Ascending aorta (tissue), 2 donors: ENCODE measurements at regions of chr2 and their contacts with region 1.

Region 1: GRCh38 chr2:27032495-27033252 is at the start of gene TMEM214:
- DNase-seq: peak; percentile 49 to 94
- H3K4me3 ChIP-seq: peak within 1 kb of the TSS; percentile 59 to 92
- H3K27ac ChIP-seq: peak within 1 kb of the TSS; percentile 78 to 91
- H3K4me1 ChIP-seq: peaks cover 5 to 18% of the 10 kb centered on the region in 2 donors
- H3K27me3 ChIP-seq: no peaks in the 10 kb centered on the region
- CTCF ChIP-seq: peak in 1 of 3 experiments; percentile 8
- total RNA-seq, gene TMEM214: 74.1 TPM

Region 2: DNA sequence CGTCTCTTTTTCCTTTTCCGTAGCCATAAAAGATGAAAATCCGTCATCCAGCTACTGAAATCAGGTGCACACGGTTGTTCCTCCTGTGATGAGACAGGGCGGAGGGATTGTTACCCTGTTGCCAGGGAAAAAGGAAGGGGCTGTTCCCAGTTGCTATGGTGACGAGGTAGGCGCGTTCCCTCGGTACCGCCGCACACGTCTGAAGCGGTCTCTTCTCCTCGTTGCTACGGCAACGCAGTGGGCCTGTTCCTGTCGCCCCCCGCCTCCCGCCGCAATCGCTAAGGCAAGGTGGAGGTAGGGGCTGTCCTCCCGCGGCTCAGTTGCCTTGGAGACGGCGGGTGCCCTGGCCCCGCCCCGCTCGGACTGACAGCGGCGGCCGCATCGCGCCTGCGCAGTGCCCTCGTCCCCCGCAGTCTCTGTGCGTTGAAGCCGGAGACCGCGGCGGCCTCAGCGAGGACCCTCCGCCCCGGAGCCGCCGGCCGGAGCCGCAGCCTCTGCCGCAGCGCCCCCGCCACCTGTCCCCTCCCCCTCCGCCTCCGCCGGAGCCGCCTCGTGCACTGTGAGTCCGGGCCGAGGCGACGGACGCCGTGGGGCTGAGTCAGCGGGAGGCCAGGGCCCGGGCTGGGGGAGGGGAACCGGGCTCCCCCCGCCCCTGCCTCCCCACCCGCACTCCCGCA is 62.3 kb before region 1 on chr2 and contains the start of gene MAPRE3:
- intact Hi-C with region 1: loop called (anchors 2 kb)
- DNase-seq: peak in 1 of 2 donors; percentile 87
- H3K4me3 ChIP-seq: peak within 1 kb of the TSS; percentile 76 to 80
- H3K27ac ChIP-seq: peak within 1 kb of the TSS; percentile 72 to 81
- H3K4me1 ChIP-seq: peaks cover 6% of the 10 kb centered on the region in 2 donors
- H3K27me3 ChIP-seq: no peaks in the 10 kb centered on the region
- CTCF ChIP-seq: no peak
- total RNA-seq, gene MAPRE3: 18.9 TPM

Region 3: DNA sequence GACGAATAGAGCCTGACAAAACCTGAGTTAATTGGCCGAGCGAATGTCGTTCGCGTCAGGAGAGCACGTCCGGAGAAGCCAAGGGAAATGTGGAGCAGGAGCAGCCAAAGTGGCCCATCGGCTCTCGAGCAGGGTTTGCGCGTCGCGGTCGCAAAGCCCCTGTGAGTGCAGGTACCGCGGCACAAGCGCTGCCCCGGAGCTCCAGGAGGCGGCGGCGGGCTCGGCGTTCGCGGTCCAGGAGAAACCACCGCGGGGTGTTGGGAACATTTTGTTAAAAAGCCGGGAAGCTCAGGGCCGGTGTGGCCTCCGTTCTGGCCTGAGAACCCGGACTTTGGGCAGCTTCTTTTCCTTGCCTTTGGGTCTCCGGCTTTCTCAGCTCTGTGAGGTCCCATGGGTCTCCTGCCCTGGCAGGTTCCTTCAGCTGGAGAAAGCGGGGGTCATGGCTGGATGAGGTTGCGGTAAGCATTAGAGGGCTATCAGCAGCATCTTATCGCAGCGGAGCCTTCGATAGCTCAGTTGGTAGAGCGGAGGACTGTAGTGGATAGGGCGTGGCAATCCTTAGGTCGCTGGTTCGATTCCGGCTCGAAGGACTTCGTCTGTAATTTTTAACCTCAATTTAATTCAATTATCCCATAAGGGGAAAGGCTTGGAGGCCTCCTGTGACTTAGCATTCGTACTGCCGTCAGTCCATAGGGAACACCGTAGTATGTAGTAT is 17.8 kb after region 1 on chr2:
- intact Hi-C with region 1: loop called (anchors 1 kb)
- DNase-seq: peak; percentile 72 to 96
- H3K4me3 ChIP-seq: peak overlapping the region; percentile 71 to 85
- H3K27ac ChIP-seq: peak overlapping the region; percentile 85 to 93
- H3K4me1 ChIP-seq: peaks cover 0 to 4% of the 10 kb centered on the region in 2 donors
- H3K27me3 ChIP-seq: no peaks in the 10 kb centered on the region
- CTCF ChIP-seq: peak; percentile 51 to 64 (median 55)

Region 4: DNA sequence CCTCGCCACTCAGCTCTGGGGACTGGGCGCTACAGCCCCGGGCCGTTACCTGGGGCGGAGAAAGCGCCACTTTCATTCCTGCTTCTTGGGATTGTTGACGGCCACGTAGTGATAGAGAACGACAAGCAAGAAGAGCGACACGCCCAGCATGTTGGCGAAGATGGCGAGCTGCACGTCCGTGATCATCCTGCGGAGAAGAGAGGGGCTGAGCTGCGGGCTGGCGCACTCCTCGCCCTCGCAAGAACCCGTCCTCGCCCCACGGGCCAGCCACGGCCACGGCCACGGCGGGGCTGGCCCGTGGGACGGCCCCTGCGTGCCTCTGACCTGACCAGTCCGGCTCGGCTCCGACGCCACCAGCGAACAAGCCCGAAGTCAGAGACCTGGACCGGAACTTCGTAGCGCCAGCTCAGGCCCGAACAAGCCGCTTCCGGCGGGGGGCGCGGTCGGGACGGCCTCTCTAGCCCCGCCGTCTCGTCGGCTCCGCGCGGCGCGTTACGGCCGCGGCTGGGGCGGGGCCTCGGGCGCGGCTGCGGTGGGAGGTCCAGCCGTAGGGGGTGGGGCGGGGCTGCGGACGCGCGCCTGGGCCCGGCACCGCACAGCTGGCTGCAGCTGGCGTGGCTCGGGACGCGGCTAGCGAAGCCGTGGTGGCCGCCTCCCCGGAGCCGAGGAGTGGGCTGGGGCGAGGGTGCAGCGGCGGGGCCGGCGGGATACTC is 38.8 kb after region 1 on chr2 and contains the start of gene OST4:
- intact Hi-C with region 1: loop called (anchors 5 kb)
- DNase-seq: peak; percentile 78 to 97
- H3K4me3 ChIP-seq: peak within 1 kb of the TSS; percentile 81 to 91
- H3K27ac ChIP-seq: peak within 1 kb of the TSS; percentile 94 to 97
- H3K4me1 ChIP-seq: peaks cover 11 to 50% of the 10 kb centered on the region in 2 donors
- H3K27me3 ChIP-seq: no peaks in the 10 kb centered on the region
- CTCF ChIP-seq: peak in 1 of 3 experiments; percentile 16
- total RNA-seq, gene OST4: 158 TPM

Region 5: DNA sequence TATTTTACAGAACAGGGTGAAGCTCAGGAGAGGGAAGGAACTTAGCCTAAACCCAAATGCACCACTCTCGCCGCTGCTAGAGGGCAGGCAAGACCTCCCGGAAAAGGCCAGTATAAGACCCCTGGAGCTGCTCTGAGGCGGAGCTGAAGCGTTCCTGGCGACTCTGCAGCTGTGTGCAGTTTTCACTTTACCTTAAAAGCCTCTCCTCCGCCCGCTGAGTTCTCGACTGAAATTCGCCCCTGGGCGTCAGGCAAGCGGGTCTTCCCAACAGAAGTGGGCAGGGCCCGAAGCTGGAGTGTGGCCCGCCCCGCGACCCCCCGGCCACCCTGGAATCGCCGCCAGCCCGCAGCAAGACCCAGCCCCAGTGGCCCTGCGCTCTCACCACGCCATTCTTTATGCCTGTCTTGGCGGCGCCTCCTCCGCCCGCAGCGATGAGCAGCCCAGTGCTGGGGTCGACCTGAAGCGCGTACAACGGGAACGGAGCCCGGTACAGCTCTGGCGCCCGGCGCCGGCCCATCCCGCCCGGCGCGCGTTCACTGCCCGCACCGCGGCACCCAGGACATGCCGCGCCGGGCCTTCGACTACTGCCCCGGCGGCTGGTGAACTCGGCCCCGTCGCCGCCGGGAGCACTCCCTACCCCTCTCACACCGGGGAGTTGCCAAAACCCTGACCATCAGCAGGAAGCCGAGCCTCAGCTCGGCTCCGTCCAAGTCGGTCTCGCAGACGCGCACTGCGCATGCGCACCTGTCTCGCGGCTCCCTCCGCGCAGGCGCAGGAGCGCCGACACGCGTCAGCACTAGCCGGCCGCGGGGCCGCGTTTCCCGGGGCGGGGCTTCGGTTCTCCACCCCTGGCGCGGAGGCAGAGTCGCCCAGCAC is 101.5 kb after region 1 on chr2 and contains the start of gene PREB:
- intact Hi-C with region 1: loop called (anchors 5 kb)
- DNase-seq: peak; percentile 77 to 98
- H3K4me3 ChIP-seq: peak within 1 kb of the TSS; percentile 89 to 96
- H3K27ac ChIP-seq: peak within 1 kb of the TSS; percentile 90 to 91
- H3K4me1 ChIP-seq: peaks cover 5 to 11% of the 10 kb centered on the region in 2 donors
- H3K27me3 ChIP-seq: no peaks in the 10 kb centered on the region
- CTCF ChIP-seq: peak in 1 of 3 experiments; percentile 11
- total RNA-seq, gene PREB: 116 TPM

Region 6: DNA sequence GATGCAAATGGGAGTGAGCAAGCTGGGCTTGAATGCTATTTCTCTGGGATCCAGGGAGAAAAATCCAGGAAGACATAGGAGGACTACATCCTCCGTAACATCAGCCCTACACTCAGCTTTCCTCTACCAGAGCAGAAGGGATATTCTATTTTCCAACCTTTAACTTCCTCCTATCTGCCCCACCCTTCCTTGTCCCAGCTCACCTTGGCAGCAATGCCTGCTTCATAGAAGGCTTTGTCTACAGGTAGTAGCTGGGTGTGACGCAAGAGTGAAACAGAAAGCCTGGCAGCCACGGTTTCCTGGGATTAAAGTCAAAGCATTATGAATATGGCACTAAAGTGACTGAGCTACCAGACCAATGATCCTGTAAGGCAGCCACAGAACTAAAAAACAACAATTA is 413.4 kb after region 1 on chr2:
- intact Hi-C with region 1: no loop called
- DNase-seq: no peak
- H3K4me3 ChIP-seq: no peak overlapping the region
- H3K27ac ChIP-seq: no peak overlapping the region
- H3K4me1 ChIP-seq: peaks cover 0 to 9% of the 10 kb centered on the region in 2 donors
- H3K27me3 ChIP-seq: no peaks in the 10 kb centered on the region
- CTCF ChIP-seq: no peak